B cell (primary cell): ENCODE measurements at regions of chr11 and their contacts with region 1.

Region 1: DNA sequence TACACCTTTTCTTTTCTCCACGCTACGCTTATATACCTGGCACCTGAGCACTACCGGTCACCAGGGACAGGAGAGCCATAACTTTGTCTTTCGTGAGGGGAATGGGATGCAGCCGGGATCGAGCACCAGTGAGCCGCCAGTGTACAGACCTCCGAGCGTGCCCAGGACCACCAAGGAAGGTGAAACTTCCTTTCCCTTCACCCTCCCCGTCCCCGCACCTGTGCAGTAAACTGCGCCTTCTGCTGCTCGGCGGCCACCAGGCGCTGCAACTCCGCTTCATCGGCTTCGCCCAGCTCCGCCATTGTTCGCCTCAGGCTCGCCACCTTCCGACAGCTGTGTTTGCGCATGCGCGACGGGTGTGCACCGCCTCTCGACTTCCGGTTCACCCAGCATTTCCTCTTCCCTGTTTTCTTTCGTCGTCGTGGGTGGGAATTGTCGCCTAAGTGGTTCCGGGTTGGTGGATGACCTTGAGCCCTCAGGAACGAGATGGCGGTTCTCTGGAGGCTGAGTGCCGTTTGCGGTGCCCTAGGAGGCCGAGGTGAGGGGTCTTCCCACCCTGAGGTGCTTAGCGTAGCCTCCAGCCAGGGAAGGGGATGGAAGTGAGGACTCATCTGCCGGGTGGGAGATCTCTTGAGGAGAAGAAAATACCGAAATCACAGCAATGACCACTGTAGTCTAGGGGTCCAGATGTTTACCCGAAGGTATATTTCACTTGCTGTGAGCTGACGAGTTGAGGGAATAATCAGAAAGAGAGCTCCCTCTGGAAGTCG is at the starts of genes SDHD and TIMM8B:
- DNase-seq: peak; percentile 98
- ATAC-seq: peak; percentile 89
- H3K4me3 ChIP-seq: peak within 1 kb of the TSS; percentile 73 to 100 (median 97)
- H3K4me3 Mint-ChIP-seq: peak within 1 kb of the TSS; percentile 89
- H3K27ac ChIP-seq: peak within 1 kb of the TSS; percentile 77 to 91
- H3K27ac Mint-ChIP-seq: peak within 1 kb of the TSS; percentile 93
- H3K4me1 ChIP-seq: peaks cover 18 to 21% of the 10 kb centered on the region in 2 donors
- H3K4me1 Mint-ChIP-seq: peaks cover 42% of the 10 kb centered on the region
- H3K27me3 ChIP-seq: no peaks in the 10 kb centered on the region
- H3K27me3 Mint-ChIP-seq: no peaks in the 10 kb centered on the region
- CTCF ChIP-seq: peak; percentile 26
- total RNA-seq, gene SDHD: 55.0 and 57.7 TPM in 2 replicates
- total RNA-seq, gene TIMM8B: 22.4 and 25.5 TPM in 2 replicates

Region 2: GRCh38 chr11:111870886-111871692 is 215.5 kb before region 1 on chr11 and contains the start of gene ALG9:
- CTCF ChIA-PET with region 1: interaction called, 4 read pairs
- POLR2A ChIA-PET with region 1: interaction called, 3 read pairs
- intact Hi-C with region 1: loop called (anchors 2 kb)
- DNase-seq: peak; percentile 94
- ATAC-seq: peak; percentile 94
- H3K4me3 ChIP-seq: peak within 1 kb of the TSS; percentile 62 to 81 (median 80)
- H3K4me3 Mint-ChIP-seq: peak within 1 kb of the TSS; percentile 94
- H3K27ac ChIP-seq: peak within 1 kb of the TSS; percentile 72 to 91
- H3K27ac Mint-ChIP-seq: peak within 1 kb of the TSS; percentile 94
- H3K4me1 ChIP-seq: peaks cover 13 to 14% of the 10 kb centered on the region in 2 donors
- H3K4me1 Mint-ChIP-seq: peaks cover 17% of the 10 kb centered on the region
- H3K27me3 ChIP-seq: no peaks in the 10 kb centered on the region
- H3K27me3 Mint-ChIP-seq: no peaks in the 10 kb centered on the region
- CTCF ChIP-seq: no peak
- total RNA-seq, gene ALG9: 23.9 and 29.9 TPM in 2 replicates

Region 3: GRCh38 chr11:112042161-112042960 is 44.2 kb before region 1 on chr11:
- CTCF ChIA-PET with region 1: no interaction called
- POLR2A ChIA-PET with region 1: no interaction called
- intact Hi-C with region 1: no loop called
- DNase-seq: no peak
- ATAC-seq: no peak
- H3K4me3 ChIP-seq: no peak overlapping the region
- H3K4me3 Mint-ChIP-seq: no peak overlapping the region
- H3K27ac ChIP-seq: no peak overlapping the region
- H3K27ac Mint-ChIP-seq: no peak overlapping the region
- H3K4me1 ChIP-seq: no peaks in the 10 kb centered on the region
- H3K4me1 Mint-ChIP-seq: peaks cover 3% of the 10 kb centered on the region
- H3K27me3 ChIP-seq: no peaks in the 10 kb centered on the region
- H3K27me3 Mint-ChIP-seq: no peaks in the 10 kb centered on the region
- CTCF ChIP-seq: no peak

Region 4: DNA sequence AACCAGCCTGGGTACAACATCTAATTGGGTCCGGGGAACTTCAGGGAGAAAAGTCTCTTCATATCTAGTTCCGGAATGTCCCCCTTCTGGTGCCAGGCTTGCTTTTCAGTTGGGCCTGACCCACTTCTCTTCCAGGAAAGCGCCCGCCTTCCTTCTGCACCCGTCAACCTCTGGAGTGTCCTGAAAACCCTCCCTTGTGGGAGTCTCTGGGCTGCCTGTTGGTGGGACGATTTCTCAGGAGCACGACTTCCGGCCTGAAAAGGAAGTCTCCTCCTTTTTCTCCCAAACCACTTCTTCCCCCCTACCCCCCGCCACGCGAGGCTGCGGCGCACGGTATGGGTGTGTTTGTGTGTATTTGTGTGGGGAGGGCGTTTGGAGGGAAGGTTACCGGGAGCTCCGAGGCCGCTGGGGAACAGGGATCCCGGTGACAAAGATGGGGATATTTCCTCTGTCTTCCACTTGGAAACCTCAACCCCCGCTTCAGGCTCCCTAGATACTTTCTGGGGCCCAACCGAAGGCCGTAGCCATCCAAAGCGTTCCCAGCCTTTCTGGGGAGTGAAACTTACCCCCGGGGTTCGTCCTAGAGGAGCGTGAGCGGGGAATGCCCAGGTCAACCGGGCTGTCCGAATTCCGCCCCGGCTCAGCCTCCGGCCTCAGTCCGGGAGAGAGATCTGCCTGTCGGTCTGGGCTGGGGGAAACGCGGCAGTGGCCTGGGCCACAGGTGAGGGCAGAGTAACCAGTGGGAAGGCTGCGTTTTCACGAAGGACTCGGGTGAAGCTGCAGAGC is 12.4 kb before region 1 on chr11 and contains the start of gene NKAPD1:
- CTCF ChIA-PET with region 1: interaction called, 6 read pairs
- POLR2A ChIA-PET with region 1: interaction called, 4 read pairs
- intact Hi-C with region 1: loop called (anchors 1 kb)
- DNase-seq: peak; percentile 95
- ATAC-seq: peak; percentile 85
- H3K4me3 ChIP-seq: peak within 1 kb of the TSS; percentile 78 to 98 (median 81)
- H3K4me3 Mint-ChIP-seq: peak within 1 kb of the TSS; percentile 97
- H3K27ac ChIP-seq: peak within 1 kb of the TSS; percentile 53 to 88
- H3K27ac Mint-ChIP-seq: peak within 1 kb of the TSS; percentile 97
- H3K4me1 ChIP-seq: peaks cover 12 to 13% of the 10 kb centered on the region in 2 donors
- H3K4me1 Mint-ChIP-seq: peaks cover 31% of the 10 kb centered on the region
- H3K27me3 ChIP-seq: no peaks in the 10 kb centered on the region
- H3K27me3 Mint-ChIP-seq: peaks cover 3% of the 10 kb centered on the region
- CTCF ChIP-seq: peak; percentile 23
- total RNA-seq, gene NKAPD1: 22.8 and 23.4 TPM in 2 replicates

Region 5: GRCh38 chr11:112226062-112226830 is 139.6 kb after region 1 on chr11 and contains the start of gene PTS:
- CTCF ChIA-PET with region 1: no interaction called
- POLR2A ChIA-PET with region 1: no interaction called
- intact Hi-C with region 1: loop called (anchors 1 kb)
- DNase-seq: peak; percentile 94
- ATAC-seq: peak; percentile 90
- H3K4me3 ChIP-seq: peak within 1 kb of the TSS; percentile 82 to 98 (median 92)
- H3K4me3 Mint-ChIP-seq: peak within 1 kb of the TSS; percentile 95
- H3K27ac ChIP-seq: peak within 1 kb of the TSS; percentile 99
- H3K27ac Mint-ChIP-seq: peak within 1 kb of the TSS; percentile 99
- H3K4me1 ChIP-seq: peaks cover 10 to 18% of the 10 kb centered on the region in 2 donors
- H3K4me1 Mint-ChIP-seq: peaks cover 23% of the 10 kb centered on the region
- H3K27me3 ChIP-seq: no peaks in the 10 kb centered on the region
- H3K27me3 Mint-ChIP-seq: no peaks in the 10 kb centered on the region
- CTCF ChIP-seq: no peak
- total RNA-seq, gene PTS: 36.2 and 36.7 TPM in 2 replicates

Region 6: GRCh38 chr11:112321521-112322172 is 235.0 kb after region 1 on chr11:
- CTCF ChIA-PET with region 1: no interaction called
- POLR2A ChIA-PET with region 1: no interaction called
- intact Hi-C with region 1: no loop called
- DNase-seq: no peak
- ATAC-seq: no peak
- H3K4me3 ChIP-seq: no peak overlapping the region
- H3K4me3 Mint-ChIP-seq: no peak overlapping the region
- H3K27ac ChIP-seq: no peak overlapping the region
- H3K27ac Mint-ChIP-seq: no peak overlapping the region
- H3K4me1 ChIP-seq: no peaks in the 10 kb centered on the region
- H3K4me1 Mint-ChIP-seq: no peaks in the 10 kb centered on the region
- H3K27me3 ChIP-seq: no peaks in the 10 kb centered on the region
- H3K27me3 Mint-ChIP-seq: no peaks in the 10 kb centered on the region
- CTCF ChIP-seq: no peak